Naive thymus-derived CD8-positive, alpha-beta T cell (primary cell): ENCODE measurements at regions of chr12 and their contacts with region 1.

Region 1: DNA sequence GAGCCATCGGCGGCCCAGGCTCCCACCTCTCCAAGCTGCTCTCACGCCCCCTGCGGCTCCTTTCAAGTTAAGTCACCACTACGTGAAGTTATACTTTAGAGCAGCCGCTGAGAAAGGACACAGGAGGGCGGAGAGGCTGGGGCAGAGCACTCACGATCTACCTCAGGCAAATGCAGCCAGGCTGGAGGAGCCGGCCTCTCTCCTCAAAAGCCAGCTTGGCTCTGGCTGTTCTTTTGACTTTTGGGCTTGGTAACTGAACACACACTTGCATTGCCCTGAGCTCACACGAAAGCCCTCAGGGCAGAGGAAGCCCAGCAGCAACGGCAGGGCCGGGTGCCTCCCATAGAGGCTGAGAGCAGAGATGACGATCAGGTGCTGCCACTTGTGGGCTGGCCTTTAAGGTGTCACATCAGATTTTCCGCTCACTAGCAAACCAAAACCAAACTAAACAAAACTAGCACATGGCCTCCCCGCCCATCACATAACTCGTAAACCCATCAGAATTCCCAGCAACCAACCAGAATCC is 75.2 kb downstream of the PITPNM2 start:
- DNase-seq: peak; percentile 45 to 88 (median 73)
- ATAC-seq: peak; percentile 82 to 89
- H3K4me3 Mint-ChIP-seq: peak overlapping the region; percentile 82 to 98 (median 94)
- H3K27ac Mint-ChIP-seq: peak overlapping the region; percentile 94 to 99 (median 96)
- H3K4me1 Mint-ChIP-seq: peaks cover 35 to 78% (median 72%) of the 10 kb centered on the region in 4 donors
- H3K27me3 Mint-ChIP-seq: no peaks in the 10 kb centered on the region

Region 2: GRCh38 chr12:123043536-123044001 is 32.1 kb before region 1 on chr12:
- POLR2A ChIA-PET with region 1: interaction called, 26 read pairs
- DNase-seq: peak; percentile 42 to 89 (median 70)
- ATAC-seq: peak; percentile 98 to 99
- H3K4me3 Mint-ChIP-seq: peak overlapping the region in 9 of 10 donors; percentile 11 to 77 (median 65)
- H3K27ac Mint-ChIP-seq: peak overlapping the region; percentile 88 to 99 (median 94)
- H3K4me1 Mint-ChIP-seq: peaks cover 29 to 50% (median 47%) of the 10 kb centered on the region in 4 donors
- H3K27me3 Mint-ChIP-seq: no peaks in the 10 kb centered on the region

Region 3: DNA sequence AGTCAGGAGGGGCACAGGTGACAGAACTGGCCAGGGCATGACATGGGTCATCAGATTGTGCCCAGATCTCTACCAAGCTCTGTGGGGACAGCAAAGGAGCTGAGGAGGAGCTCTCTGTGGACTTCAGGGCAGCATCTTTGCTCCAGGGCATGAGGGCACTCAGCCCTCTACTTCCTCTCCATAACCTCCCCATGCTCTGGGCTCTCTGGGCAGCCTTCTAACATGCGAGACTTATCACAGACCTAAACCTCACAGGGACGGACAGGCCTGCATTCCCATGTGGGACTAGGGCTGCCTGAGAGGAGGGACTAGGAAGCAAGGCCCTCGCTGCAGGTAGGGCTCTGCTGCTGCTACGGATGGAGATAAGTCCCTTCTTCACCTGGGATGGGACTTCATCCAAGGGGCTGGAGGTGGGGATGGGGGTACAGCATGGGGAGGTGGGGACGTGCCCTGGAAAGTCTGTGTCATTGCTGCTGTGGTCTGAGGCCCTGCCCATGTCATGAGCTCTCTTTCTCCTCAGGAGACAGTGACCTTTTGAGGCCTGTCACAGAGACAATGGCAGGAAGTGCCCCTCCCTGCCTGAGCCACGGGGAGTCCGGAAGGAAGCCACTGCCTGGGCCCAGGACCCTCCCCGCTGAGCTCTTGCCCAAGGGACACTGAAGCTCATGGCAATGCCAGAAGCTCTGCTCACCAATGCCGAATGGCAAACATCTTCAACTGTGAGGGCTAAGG is 31.1 kb after region 1 on chr12:
- POLR2A ChIA-PET with region 1: interaction called, 16 read pairs
- DNase-seq: peak in 9 of 10 donors; percentile 23 to 78 (median 45)
- ATAC-seq: peak; percentile 91
- H3K4me3 Mint-ChIP-seq: peak overlapping the region; percentile 43 to 84 (median 76)
- H3K27ac Mint-ChIP-seq: peak overlapping the region; percentile 89 to 97 (median 96)
- H3K4me1 Mint-ChIP-seq: peaks cover 44 to 76% (median 72%) of the 10 kb centered on the region in 4 donors
- H3K27me3 Mint-ChIP-seq: no peaks in the 10 kb centered on the region

Region 4: DNA sequence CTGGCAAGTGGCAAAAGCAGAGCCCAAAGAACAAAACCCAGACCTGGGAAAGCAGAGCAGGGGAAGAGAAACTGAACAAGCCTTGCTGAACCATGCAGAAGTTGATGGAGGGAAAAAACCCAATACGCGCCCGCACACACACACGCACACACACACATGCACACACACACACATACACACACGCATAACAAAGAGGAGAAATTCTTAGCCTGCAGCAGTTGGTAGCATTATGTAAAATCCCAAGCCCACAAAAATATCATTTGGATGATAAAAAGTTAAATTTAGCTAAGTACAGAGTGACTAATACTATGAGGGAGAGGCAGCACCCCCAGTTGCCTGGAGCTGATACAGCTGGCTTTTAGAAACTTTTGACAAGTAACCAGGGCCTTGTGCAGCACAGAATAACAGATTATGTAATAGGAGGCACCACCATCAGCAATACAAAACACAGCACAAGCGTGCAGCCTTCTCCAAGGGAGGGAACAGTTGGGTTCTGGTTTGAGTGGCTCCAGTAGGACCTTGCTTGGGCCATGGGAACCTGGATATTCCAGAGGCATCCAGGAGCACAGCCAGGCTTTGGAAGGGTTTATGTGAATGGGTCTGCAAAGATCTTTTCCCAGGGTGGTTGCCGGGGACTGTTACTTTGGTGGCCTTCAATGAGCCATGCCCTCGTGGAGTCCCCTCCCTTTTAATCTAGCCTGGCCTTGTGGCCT is 39.9 kb after region 1 on chr12:
- POLR2A ChIA-PET with region 1: interaction called, 30 read pairs
- DNase-seq: peak in 5 of 10 donors; percentile 22 to 75 (median 63)
- ATAC-seq: peak; percentile 85 to 87
- H3K4me3 Mint-ChIP-seq: peak overlapping the region in 9 of 10 donors; percentile 40 to 64 (median 54)
- H3K27ac Mint-ChIP-seq: peak overlapping the region; percentile 89 to 97 (median 94)
- H3K4me1 Mint-ChIP-seq: peaks cover 34 to 93% (median 78%) of the 10 kb centered on the region in 4 donors
- H3K27me3 Mint-ChIP-seq: no peaks in the 10 kb centered on the region

Region 5: DNA sequence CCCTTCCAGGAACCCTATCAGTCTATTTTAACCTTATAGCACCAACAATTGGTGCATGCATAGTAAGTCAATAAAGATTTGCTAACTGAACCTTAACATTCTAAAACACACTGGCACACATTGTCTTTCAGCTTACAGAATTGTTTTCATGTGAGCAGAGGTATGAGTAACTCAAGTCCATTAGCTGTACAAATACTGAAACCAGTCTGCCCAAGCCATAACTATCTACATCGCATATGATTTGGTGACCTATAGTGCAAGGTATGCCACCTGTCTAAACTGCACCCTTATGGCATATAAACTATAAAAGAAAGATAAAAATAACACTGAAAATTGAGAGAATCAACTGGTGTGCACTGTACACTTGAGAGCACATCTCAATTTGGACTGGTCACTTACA is 254.1 kb after region 1 on chr12:
- POLR2A ChIA-PET with region 1: no interaction called
- DNase-seq: no peak
- ATAC-seq: no peak
- H3K4me3 Mint-ChIP-seq: no peak overlapping the region
- H3K27ac Mint-ChIP-seq: no peak overlapping the region
- H3K4me1 Mint-ChIP-seq: no peaks in the 10 kb centered on the region
- H3K27me3 Mint-ChIP-seq: no peaks in the 10 kb centered on the region